WTC11 (cell line): ENCODE measurements at regions of chr11 and their contacts with region 1.

Region 1: DNA sequence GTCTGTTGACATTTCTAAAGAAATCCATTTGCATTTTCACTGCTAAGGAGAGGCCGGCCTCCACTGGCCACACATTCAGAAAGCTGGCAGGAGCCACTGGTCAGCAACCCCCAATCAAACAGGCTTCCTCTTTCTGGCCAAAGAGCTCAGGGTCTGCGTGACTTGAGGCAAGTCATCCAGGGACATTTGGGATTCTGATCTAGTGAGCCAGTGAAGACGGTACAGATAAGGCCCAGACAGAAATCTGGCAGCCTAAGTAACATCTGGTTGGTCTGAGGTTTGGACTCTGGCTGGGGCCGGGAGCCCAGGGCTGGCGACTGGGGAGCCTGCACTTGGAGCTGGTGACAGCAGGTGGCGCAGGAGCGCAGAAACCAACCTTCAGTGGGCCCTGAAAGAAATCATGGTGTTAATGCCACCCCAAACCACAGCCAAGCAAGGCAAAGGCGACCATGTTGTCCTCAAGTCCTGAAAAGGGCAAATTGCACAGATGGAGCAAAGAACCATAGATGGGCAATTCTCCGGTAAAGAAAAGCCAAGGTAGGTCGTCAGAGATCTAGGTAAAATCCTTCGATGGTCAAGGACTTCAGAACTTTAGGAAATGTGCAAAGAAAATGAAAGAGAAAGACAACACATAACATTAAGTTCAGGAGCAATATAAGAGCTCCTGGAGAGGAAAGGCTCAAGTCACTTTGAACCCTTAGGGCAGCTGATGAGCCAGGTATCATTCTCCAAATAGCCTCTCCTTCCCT is 99.4 kb upstream of the BLID start:
- DNase-seq: peak; percentile 82
- ATAC-seq: peak; percentile 96
- H3K4me3 Mint-ChIP-seq: no peak overlapping the region
- H3K27ac Mint-ChIP-seq: no peak overlapping the region
- H3K4me1 Mint-ChIP-seq: peaks cover 38% of the 10 kb centered on the region
- H3K27me3 Mint-ChIP-seq: no peaks in the 10 kb centered on the region
- CTCF ChIP-seq: peak; percentile 80

Region 2: GRCh38 chr11:121909596-121909995 is 305.8 kb before region 1 on chr11:
- CTCF ChIA-PET with region 1: no interaction called
- POLR2A ChIA-PET with region 1: no interaction called
- DNase-seq: no peak
- ATAC-seq: no peak
- H3K4me3 Mint-ChIP-seq: no peak overlapping the region
- H3K27ac Mint-ChIP-seq: no peak overlapping the region
- H3K4me1 Mint-ChIP-seq: peaks cover 7% of the 10 kb centered on the region
- H3K27me3 Mint-ChIP-seq: peaks cover 2% of the 10 kb centered on the region; the same call in 1 of the 2 replicates
- CTCF ChIP-seq: no peak

Region 3: GRCh38 chr11:122202951-122203456 is 12.4 kb before region 1 on chr11:
- CTCF ChIA-PET with region 1: interaction called, 15 read pairs
- POLR2A ChIA-PET with region 1: no interaction called
- DNase-seq: peak; percentile 84
- ATAC-seq: peak; percentile 97
- H3K4me3 Mint-ChIP-seq: peak overlapping the region; percentile 39
- H3K27ac Mint-ChIP-seq: no peak overlapping the region
- H3K4me1 Mint-ChIP-seq: peaks cover 6% of the 10 kb centered on the region
- H3K27me3 Mint-ChIP-seq: no peaks in the 10 kb centered on the region
- CTCF ChIP-seq: peak; percentile 89

Region 4: DNA sequence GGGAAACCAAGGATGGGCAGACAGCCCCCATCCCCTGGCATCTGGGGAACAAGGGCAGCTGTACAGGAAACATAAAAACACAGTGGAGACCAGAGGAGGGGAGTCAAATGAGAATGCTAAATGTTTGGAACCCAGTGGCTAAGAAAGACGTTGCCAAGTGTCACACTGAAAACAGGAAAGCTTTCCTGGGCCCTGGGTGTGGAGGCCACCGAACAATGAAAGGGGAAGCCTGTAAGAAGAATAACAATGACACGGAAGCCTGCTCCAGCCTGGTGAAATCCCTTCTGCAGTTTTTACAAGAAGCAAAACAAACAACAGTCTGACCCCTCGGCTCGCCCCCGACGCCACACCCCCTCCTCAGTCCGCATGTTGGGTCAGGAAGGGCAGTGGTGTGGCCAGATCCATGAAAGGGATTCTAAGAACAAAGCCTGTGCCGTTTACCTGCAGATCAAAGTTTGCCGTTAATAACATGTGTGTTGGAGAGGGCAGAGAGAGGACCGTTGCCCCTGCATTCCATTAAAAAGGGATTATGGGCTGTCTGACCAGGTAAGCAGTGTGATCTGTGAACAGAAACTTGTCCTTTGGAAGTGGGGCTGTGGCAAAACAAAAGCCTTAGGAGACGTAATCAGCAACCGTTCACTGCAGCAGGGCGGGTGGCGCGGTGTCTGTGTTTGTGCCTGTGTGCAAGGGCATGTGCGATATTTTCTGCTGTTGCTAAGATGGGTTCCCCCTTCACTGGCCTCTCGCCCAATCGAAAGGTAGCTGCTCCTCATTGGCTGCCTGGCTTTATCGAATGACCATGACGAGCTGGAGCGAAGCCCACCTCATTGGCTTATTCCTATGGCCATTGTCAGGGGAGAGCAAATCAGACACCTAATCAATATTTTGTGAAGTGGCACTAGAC is 14.3 kb after region 1 on chr11:
- CTCF ChIA-PET with region 1: interaction called, 11 read pairs
- POLR2A ChIA-PET with region 1: no interaction called
- DNase-seq: peak; percentile 23
- ATAC-seq: peak; percentile 92
- H3K4me3 Mint-ChIP-seq: peak overlapping the region; percentile 4; the same call in 1 of the 2 replicates
- H3K27ac Mint-ChIP-seq: no peak overlapping the region; the same call in 1 of the 2 replicates
- H3K4me1 Mint-ChIP-seq: peaks cover 5% of the 10 kb centered on the region; the same call in 1 of the 2 replicates
- H3K27me3 Mint-ChIP-seq: no peaks in the 10 kb centered on the region
- CTCF ChIP-seq: no peak

Region 5: DNA sequence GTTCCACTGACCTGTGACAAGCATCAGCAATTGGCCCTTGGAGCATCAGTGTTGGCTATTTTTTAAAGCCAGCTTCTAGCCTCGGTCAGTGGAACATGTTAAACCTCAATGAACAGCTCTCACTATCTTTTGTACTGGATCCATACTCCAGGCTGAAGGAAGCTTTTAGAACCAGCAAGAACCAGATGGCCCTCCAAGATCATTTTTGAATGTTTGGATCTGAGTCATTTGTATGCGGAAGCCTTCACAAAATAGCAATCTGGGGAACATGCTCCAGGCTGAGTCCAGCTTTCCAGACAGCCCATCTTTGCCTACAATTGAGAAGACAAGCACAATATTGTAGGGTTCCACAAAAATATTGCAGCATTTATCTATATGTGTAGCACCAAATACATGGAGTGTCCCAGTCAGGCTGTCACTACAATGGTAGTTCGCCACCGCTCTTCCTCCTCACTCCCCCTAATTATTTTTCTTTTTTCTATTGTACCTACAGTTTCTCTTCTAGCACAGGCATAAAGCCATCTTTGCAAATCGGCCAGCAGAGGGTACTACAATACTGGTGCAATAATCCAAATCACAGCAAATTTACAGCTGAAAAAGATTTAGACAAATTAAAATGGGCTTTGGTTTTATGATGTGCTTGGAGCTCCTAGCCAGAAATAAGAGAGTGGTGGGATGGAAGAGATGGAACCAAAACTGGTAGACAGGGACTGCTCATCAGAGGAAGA is 78.0 kb after region 1 on chr11:
- CTCF ChIA-PET with region 1: interaction called, 10 read pairs
- POLR2A ChIA-PET with region 1: interaction called, 9 read pairs
- DNase-seq: no peak
- ATAC-seq: no peak
- H3K4me3 Mint-ChIP-seq: no peak overlapping the region
- H3K27ac Mint-ChIP-seq: no peak overlapping the region
- H3K4me1 Mint-ChIP-seq: no peaks in the 10 kb centered on the region
- H3K27me3 Mint-ChIP-seq: no peaks in the 10 kb centered on the region
- CTCF ChIP-seq: no peak; the same call in 1 of the 2 replicates

Region 6: GRCh38 chr11:122505304-122506006 is 290.0 kb after region 1 on chr11:
- CTCF ChIA-PET with region 1: interaction called, 32 read pairs
- POLR2A ChIA-PET with region 1: no interaction called
- DNase-seq: peak; percentile 82
- ATAC-seq: peak; percentile 96
- H3K4me3 Mint-ChIP-seq: no peak overlapping the region
- H3K27ac Mint-ChIP-seq: no peak overlapping the region
- H3K4me1 Mint-ChIP-seq: peaks cover 5% of the 10 kb centered on the region
- H3K27me3 Mint-ChIP-seq: no peaks in the 10 kb centered on the region
- CTCF ChIP-seq: peak; percentile 65